CD8-positive, alpha-beta T cell (primary cell): ENCODE measurements at regions of chr4 and their contacts with region 1.

Region 1: GRCh38 chr4:38902695-38903094 is 35.1 kb downstream of the FAM114A1 start:
- DNase-seq: peak in 2 of 9 experiments; percentile 52 to 68
- ATAC-seq: peak; percentile 87
- H3K4me3 ChIP-seq: no peak overlapping the region
- H3K4me3 Mint-ChIP-seq: no peak overlapping the region
- H3K27ac ChIP-seq: no peak overlapping the region
- H3K27ac Mint-ChIP-seq: no peak overlapping the region
- H3K4me1 ChIP-seq: no peaks in the 10 kb centered on the region
- H3K4me1 Mint-ChIP-seq: peaks cover 4% of the 10 kb centered on the region
- H3K27me3 ChIP-seq: no peaks in the 10 kb centered on the region
- H3K27me3 Mint-ChIP-seq: peaks cover 2% of the 10 kb centered on the region
- CTCF ChIP-seq: peak; percentile 71

Region 2: GRCh38 chr4:38730830-38731646 is 171.7 kb before region 1 on chr4:
- CTCF ChIA-PET with region 1: no interaction called
- POLR2A ChIA-PET with region 1: no interaction called
- intact Hi-C with region 1: no loop called
- DNase-seq: peak; percentile 60 to 90 (median 81)
- ATAC-seq: peak; percentile 75
- H3K4me3 ChIP-seq: no peak overlapping the region
- H3K4me3 Mint-ChIP-seq: no peak overlapping the region
- H3K27ac ChIP-seq: no peak overlapping the region
- H3K27ac Mint-ChIP-seq: no peak overlapping the region
- H3K4me1 ChIP-seq: peaks cover 7% of the 10 kb centered on the region
- H3K4me1 Mint-ChIP-seq: peaks cover 11% of the 10 kb centered on the region
- H3K27me3 ChIP-seq: no peaks in the 10 kb centered on the region
- H3K27me3 Mint-ChIP-seq: no peaks in the 10 kb centered on the region
- CTCF ChIP-seq: peak; percentile 91

Region 3: GRCh38 chr4:38759113-38759789 is 143.4 kb before region 1 on chr4:
- CTCF ChIA-PET with region 1: interaction called, 11 read pairs
- POLR2A ChIA-PET with region 1: no interaction called
- intact Hi-C with region 1: loop called in 1 of 2 experiments (anchors 2 kb)
- DNase-seq: peak; percentile 38 to 79 (median 52)
- ATAC-seq: peak; percentile 72
- H3K4me3 ChIP-seq: no peak overlapping the region
- H3K4me3 Mint-ChIP-seq: no peak overlapping the region
- H3K27ac ChIP-seq: no peak overlapping the region
- H3K27ac Mint-ChIP-seq: no peak overlapping the region
- H3K4me1 ChIP-seq: no peaks in the 10 kb centered on the region
- H3K4me1 Mint-ChIP-seq: peaks cover 19% of the 10 kb centered on the region
- H3K27me3 ChIP-seq: no peaks in the 10 kb centered on the region
- H3K27me3 Mint-ChIP-seq: no peaks in the 10 kb centered on the region
- CTCF ChIP-seq: peak; percentile 90

Region 4: GRCh38 chr4:39044364-39044955 is 141.8 kb after region 1 on chr4:
- CTCF ChIA-PET with region 1: interaction called, 14 read pairs
- POLR2A ChIA-PET with region 1: no interaction called
- intact Hi-C with region 1: loop called in 1 of 2 experiments (anchors 1 kb)
- DNase-seq: peak; percentile 85 to 99 (median 93)
- ATAC-seq: peak; percentile 83
- H3K4me3 ChIP-seq: peak overlapping the region; percentile 60 to 66
- H3K4me3 Mint-ChIP-seq: peak overlapping the region; percentile 92
- H3K27ac ChIP-seq: peak overlapping the region; percentile 59 to 89
- H3K27ac Mint-ChIP-seq: peak overlapping the region; percentile 96
- H3K4me1 ChIP-seq: peaks cover 21% of the 10 kb centered on the region
- H3K4me1 Mint-ChIP-seq: peaks cover 53% of the 10 kb centered on the region
- H3K27me3 ChIP-seq: no peaks in the 10 kb centered on the region
- H3K27me3 Mint-ChIP-seq: no peaks in the 10 kb centered on the region
- CTCF ChIP-seq: no peak

Region 5: DNA sequence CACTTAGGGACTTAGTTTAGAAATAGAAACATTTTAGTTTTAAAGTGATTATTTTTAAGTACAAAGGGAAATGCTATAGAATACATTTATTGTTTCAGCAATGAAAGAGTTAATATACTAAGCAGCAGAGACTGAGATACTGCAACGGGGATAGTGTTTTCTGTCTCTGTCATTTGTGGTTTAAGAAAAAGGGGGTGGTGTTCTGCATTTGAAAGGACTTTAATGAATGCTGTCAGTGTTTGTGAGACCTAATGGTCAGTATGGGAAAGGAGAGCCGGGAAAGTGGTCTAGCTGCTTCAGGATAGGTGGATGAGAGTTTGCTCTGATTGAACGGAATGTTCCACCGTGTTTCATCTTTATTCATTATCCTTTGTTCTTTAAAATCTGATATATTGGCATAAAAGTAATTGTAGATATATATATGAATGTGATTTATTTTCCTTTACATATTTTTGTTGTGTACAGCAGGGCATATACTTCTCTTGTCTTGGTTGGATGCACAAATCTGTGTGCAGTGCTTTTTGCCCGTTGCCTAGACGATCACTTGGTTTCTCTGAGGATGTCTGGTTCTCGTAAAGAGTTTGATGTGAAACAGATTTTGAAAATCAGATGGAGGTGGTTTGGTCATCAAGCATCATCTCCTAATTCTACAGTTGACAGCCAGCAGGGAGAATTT is 159.5 kb after region 1 on chr4 and contains the start of gene KLHL5:
- CTCF ChIA-PET with region 1: interaction called, 3 read pairs
- POLR2A ChIA-PET with region 1: no interaction called
- intact Hi-C with region 1: loop called in 1 of 2 experiments (anchors 5 kb)
- DNase-seq: no peak
- ATAC-seq: no peak
- H3K4me3 ChIP-seq: no peak within 1 kb of the TSS
- H3K4me3 Mint-ChIP-seq: no peak within 1 kb of the TSS
- H3K27ac ChIP-seq: no peak within 1 kb of the TSS
- H3K27ac Mint-ChIP-seq: peak within 1 kb of the TSS; percentile 4
- H3K4me1 ChIP-seq: no peaks in the 10 kb centered on the region
- H3K4me1 Mint-ChIP-seq: peaks cover 18% of the 10 kb centered on the region
- H3K27me3 ChIP-seq: no peaks in the 10 kb centered on the region
- H3K27me3 Mint-ChIP-seq: no peaks in the 10 kb centered on the region
- CTCF ChIP-seq: no peak
- total RNA-seq, gene KLHL5: 11.8 to 13.2 TPM

Region 6: DNA sequence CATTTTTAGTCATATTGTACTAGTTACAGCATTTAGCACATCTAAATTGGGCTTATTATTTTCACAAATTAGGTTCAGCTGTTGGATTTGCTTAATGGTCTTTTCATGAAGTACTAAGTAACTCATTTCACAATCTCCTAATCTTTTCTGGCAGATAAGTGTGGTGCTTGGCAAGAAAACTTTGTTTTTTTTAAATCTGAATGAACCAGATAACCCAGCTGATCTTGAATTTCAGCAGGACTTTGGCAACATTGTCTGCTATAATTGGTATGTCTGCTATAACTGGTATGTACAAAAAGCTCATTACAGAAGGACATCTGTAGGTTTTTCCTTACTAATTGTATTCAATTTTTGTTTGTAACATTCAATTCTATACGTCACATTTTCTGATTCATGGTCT is 302.3 kb after region 1 on chr4:
- CTCF ChIA-PET with region 1: no interaction called
- POLR2A ChIA-PET with region 1: no interaction called
- intact Hi-C with region 1: no loop called
- DNase-seq: no peak
- ATAC-seq: no peak
- H3K4me3 ChIP-seq: no peak overlapping the region
- H3K4me3 Mint-ChIP-seq: no peak overlapping the region
- H3K27ac ChIP-seq: no peak overlapping the region
- H3K27ac Mint-ChIP-seq: no peak overlapping the region
- H3K4me1 ChIP-seq: no peaks in the 10 kb centered on the region
- H3K4me1 Mint-ChIP-seq: no peaks in the 10 kb centered on the region
- H3K27me3 ChIP-seq: no peaks in the 10 kb centered on the region
- H3K27me3 Mint-ChIP-seq: no peaks in the 10 kb centered on the region
- CTCF ChIP-seq: no peak

Region 7: DNA sequence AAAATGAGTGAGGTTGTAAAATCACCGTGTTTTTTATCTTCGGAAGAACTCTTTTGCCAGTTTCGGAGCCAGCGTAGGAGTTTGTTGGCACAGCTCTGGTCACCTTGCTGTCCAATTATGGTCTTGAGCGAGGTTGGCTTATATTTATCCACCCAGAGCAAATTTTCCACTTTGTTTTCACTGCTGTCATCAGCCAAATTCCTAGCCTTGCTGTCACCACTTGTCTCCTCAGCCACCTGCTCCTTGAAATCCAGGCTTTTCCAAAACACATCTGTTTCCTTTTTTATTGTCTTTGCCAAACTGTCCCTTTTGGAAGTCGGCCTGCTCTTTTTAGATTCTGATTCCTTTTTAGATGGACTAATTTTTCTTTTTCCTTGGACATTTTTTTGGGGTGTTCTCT is 405.9 kb after region 1 on chr4:
- CTCF ChIA-PET with region 1: no interaction called
- POLR2A ChIA-PET with region 1: no interaction called
- intact Hi-C with region 1: loop called in 1 of 2 experiments (anchors 10 kb)
- DNase-seq: no peak
- ATAC-seq: no peak
- H3K4me3 ChIP-seq: no peak overlapping the region
- H3K4me3 Mint-ChIP-seq: no peak overlapping the region
- H3K27ac ChIP-seq: no peak overlapping the region
- H3K27ac Mint-ChIP-seq: no peak overlapping the region
- H3K4me1 ChIP-seq: no peaks in the 10 kb centered on the region
- H3K4me1 Mint-ChIP-seq: peaks cover 1% of the 10 kb centered on the region
- H3K27me3 ChIP-seq: no peaks in the 10 kb centered on the region
- H3K27me3 Mint-ChIP-seq: no peaks in the 10 kb centered on the region
- CTCF ChIP-seq: no peak

Region 8: DNA sequence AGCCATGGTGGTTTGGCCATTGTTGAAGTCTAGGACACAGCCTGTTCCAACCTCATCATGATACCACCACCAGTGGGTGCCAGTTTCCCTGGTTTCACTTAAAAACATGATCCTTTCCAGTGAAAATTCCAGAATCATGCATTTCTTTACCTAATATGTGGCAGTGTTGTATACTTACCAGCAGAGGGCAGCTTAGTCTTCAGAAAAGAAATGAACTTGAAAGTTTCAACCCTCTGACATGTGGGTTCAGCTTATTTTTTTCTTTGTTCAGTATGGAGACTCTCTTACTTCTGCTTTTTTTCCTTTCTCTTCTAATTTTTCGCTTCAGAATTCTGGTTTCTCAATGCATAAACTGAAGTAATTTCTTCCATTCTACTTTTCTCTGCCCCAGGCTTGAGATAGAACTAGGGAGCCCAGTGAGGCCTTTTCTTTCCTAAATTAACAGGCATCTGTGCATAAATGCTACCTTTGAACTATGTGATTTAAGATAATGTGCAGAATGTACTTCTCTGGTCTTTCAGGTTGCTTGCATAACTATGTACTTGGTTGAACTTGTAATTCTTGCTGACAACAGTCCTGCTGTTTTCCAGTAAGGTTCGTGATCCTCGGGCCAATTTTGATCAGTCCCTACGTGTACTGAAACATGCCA is 566.9 kb after region 1 on chr4:
- CTCF ChIA-PET with region 1: interaction called, 4 read pairs
- POLR2A ChIA-PET with region 1: no interaction called
- intact Hi-C with region 1: loop called in 1 of 2 experiments (anchors 1 kb)
- DNase-seq: peak in 2 of 9 experiments; percentile 55 to 72
- ATAC-seq: peak; percentile 93
- H3K4me3 ChIP-seq: no peak overlapping the region
- H3K4me3 Mint-ChIP-seq: no peak overlapping the region
- H3K27ac ChIP-seq: no peak overlapping the region
- H3K27ac Mint-ChIP-seq: no peak overlapping the region
- H3K4me1 ChIP-seq: no peaks in the 10 kb centered on the region
- H3K4me1 Mint-ChIP-seq: peaks cover 4% of the 10 kb centered on the region
- H3K27me3 ChIP-seq: no peaks in the 10 kb centered on the region
- H3K27me3 Mint-ChIP-seq: no peaks in the 10 kb centered on the region
- CTCF ChIP-seq: peak; percentile 82